ENCODE measurements at regions of chr1 and their contacts with region 1.

Region 1: GRCh38 chr1:7752512-7753417 is 18.3 kb upstream of the VAMP3 start:
- DNase-seq: peak; percentile 62
- H3K4me3 ChIP-seq: no peak overlapping the region; a peak in 3 of 4 replicates
- H3K27ac ChIP-seq: peak overlapping the region in 1 of 2 experiments; percentile 77; a peak in 2 of 4 replicates
- H3K4me1 ChIP-seq: peaks cover 0 to 17% of the 10 kb centered on the region in 2 experiments; a peak in 2 of 4 replicates
- H3K27me3 ChIP-seq: no peaks in the 10 kb centered on the region
- CTCF ChIP-seq: peak; percentile 75
- EP300 ChIP-seq: no peak
- RAD21 ChIP-seq: peak; percentile 91

Region 2: DNA sequence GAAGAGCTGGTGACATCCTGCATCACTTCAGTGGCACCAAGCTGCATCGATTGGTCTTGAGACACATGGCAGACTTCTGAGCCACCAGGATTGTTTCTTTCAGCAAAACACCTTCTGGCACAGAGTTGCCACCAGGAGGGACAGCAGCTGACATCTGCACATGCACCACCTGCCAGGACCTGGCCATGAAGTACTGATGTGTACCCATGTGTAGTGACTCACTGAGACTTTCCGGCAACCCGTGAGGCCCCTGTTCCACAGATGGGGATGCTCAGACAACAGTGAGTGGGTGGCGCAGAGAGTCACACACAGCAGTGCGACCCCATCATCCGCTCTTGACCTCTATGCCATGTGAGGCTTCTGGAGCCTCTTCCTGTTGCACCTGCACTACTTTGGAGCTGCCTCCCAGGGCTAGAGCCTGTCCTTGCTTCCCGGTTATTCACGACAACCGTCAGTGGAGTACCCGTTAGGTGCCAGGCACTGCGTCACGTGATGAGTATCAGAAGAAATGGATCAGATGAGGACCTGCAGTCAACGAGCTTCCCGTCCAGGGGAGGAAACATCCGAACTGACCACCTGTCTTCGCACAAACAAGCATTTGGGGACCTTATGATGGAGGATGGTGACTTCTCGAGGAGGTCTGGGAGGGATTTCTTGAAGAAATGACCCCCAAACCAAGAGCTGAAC is 62.1 kb before region 1 on chr1:
- CTCF ChIA-PET with region 1: interaction called, 27 read pairs
- POLR2A ChIA-PET with region 1: no interaction called
- DNase-seq: no peak
- H3K4me3 ChIP-seq: no peak overlapping the region
- H3K27ac ChIP-seq: no peak overlapping the region
- H3K4me1 ChIP-seq: peaks cover 0 to 12% of the 10 kb centered on the region in 2 experiments; a peak in 1 of 4 replicates
- H3K27me3 ChIP-seq: no peaks in the 10 kb centered on the region
- CTCF ChIP-seq: no peak
- EP300 ChIP-seq: no peak
- RAD21 ChIP-seq: no peak

Region 3: DNA sequence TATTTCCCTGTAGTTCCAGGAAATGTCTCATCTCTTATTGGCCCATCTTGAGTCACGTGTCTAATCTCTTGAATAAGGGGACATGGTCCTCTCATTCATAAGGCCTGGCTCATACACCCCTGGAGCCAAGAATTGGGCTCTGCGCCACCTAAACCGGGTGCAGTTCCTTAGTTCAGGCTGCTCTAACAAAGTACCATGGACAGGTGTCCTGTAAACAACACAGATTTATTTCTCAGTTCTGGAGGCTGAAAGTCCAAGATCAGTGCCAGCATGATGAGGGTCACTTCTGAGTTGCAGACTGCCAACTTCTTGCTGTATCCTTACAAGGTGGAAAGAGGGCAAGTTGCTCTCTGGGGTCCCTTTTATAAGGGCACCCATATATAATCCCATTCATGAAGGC is 41.9 kb before region 1 on chr1:
- CTCF ChIA-PET with region 1: interaction called, 29 read pairs
- POLR2A ChIA-PET with region 1: interaction called, 3 read pairs
- DNase-seq: no peak
- H3K4me3 ChIP-seq: no peak overlapping the region
- H3K27ac ChIP-seq: no peak overlapping the region
- H3K4me1 ChIP-seq: no peaks in the 10 kb centered on the region; a peak in 1 of 4 replicates
- H3K27me3 ChIP-seq: peaks cover 2% of the 10 kb centered on the region; the same call in 1 of the 2 replicates
- CTCF ChIP-seq: no peak
- EP300 ChIP-seq: no peak
- RAD21 ChIP-seq: no peak

Region 4: DNA sequence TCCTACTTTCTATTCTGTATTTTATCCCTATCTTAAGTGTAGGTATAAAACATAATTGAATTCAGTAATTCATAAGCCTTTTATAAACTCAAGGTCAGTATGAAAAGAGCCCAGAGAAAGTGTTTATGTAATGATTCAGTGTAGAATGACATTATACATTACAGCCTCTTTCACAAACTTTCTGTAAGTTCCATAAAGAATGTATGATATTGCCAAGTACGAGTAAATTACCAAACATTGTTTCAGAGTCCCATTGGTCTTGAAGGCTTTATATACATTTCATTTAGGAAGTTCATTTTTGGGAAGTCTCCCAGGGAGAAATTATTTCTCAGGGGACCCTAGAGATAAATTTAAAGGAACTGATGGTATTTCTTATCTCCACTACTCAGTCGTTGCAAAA is 19.5 kb before region 1 on chr1:
- CTCF ChIA-PET with region 1: interaction called, 17 read pairs
- POLR2A ChIA-PET with region 1: no interaction called
- DNase-seq: no peak
- H3K4me3 ChIP-seq: no peak overlapping the region
- H3K27ac ChIP-seq: no peak overlapping the region
- H3K4me1 ChIP-seq: peaks cover 0 to under 1% of the 10 kb centered on the region in 2 experiments; a peak in 1 of 4 replicates
- H3K27me3 ChIP-seq: no peaks in the 10 kb centered on the region
- CTCF ChIP-seq: no peak
- EP300 ChIP-seq: no peak
- RAD21 ChIP-seq: no peak

Region 5: GRCh38 chr1:7902478-7903085 is 149.8 kb after region 1 on chr1:
- CTCF ChIA-PET with region 1: interaction called, 11 read pairs
- POLR2A ChIA-PET with region 1: no interaction called
- DNase-seq: peak; percentile 80
- H3K4me3 ChIP-seq: peak overlapping the region in 1 of 2 experiments; percentile 44; a peak in 1 of 4 replicates
- H3K27ac ChIP-seq: no peak overlapping the region
- H3K4me1 ChIP-seq: no peaks in the 10 kb centered on the region
- H3K27me3 ChIP-seq: no peaks in the 10 kb centered on the region
- CTCF ChIP-seq: peak; percentile 67
- EP300 ChIP-seq: no peak
- RAD21 ChIP-seq: peak; percentile 83